ENCODE measurements at regions of chr4 and their contacts with region 1.

Region 1: GRCh38 chr4:80113615-80114014 is 40.6 kb upstream of the ANTXR2 start:
- DNase-seq: no peak
- H3K4me3 ChIP-seq: no peak overlapping the region
- H3K27ac ChIP-seq: no peak overlapping the region
- H3K4me1 ChIP-seq: no peaks in the 10 kb centered on the region
- H3K27me3 ChIP-seq: no peaks in the 10 kb centered on the region
- CTCF ChIP-seq: no peak
- EP300 ChIP-seq: no peak
- POLR2A ChIP-seq: no peak

Region 2: DNA sequence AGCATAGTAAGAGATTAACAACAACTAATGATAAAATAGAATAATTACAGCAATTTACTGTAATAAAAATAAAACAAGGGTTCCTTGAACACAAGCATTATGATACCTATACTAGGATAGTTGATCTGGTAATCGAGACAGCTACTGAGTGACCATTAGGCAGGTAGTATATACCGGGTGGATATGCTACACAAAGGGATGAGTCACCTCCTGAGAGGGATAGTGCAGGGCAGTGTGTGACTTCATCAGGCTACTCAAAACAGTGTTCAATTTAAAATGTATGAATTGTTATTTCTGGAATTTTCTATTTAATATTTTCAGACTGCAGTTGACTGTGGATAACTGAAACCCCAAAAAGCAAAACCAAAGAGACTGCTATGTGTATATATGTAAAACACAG is 30.9 kb before region 1 on chr4:
- in situ Hi-C with region 1: no loop called
- intact Hi-C with region 1: loop called (anchors 1 kb)
- DNase-seq: no peak
- H3K4me3 ChIP-seq: no peak overlapping the region
- H3K27ac ChIP-seq: no peak overlapping the region
- H3K4me1 ChIP-seq: no peaks in the 10 kb centered on the region
- H3K27me3 ChIP-seq: no peaks in the 10 kb centered on the region
- CTCF ChIP-seq: no peak
- EP300 ChIP-seq: no peak
- POLR2A ChIP-seq: no peak